ENCODE measurements at regions of chr15 and their contacts with region 1.

Region 1: GRCh38 chr15:71651750-71652186 is 158.6 kb upstream of the NR2E3 start:
- DNase-seq: peak; percentile 75
- ATAC-seq: peak; percentile 64
- H3K4me3 ChIP-seq: no peak overlapping the region
- H3K27ac ChIP-seq: no peak overlapping the region
- H3K4me1 ChIP-seq: peaks cover 10% of the 10 kb centered on the region
- H3K27me3 ChIP-seq: no peaks in the 10 kb centered on the region
- CTCF ChIP-seq: peak; percentile 82

Region 2: GRCh38 chr15:71435552-71435951 is 216.2 kb before region 1 on chr15:
- CTCF ChIA-PET with region 1: no interaction called
- POLR2A ChIA-PET with region 1: no interaction called
- intact Hi-C with region 1: no loop called
- DNase-seq: peak; percentile 0
- ATAC-seq: no peak
- H3K4me3 ChIP-seq: no peak overlapping the region
- H3K27ac ChIP-seq: no peak overlapping the region
- H3K4me1 ChIP-seq: peaks cover 34% of the 10 kb centered on the region
- H3K27me3 ChIP-seq: no peaks in the 10 kb centered on the region
- CTCF ChIP-seq: no peak

Region 3: GRCh38 chr15:71538181-71538580 is 113.6 kb before region 1 on chr15:
- CTCF ChIA-PET with region 1: no interaction called
- POLR2A ChIA-PET with region 1: no interaction called
- intact Hi-C with region 1: loop called (anchors 5 kb)
- DNase-seq: peak; percentile 79
- ATAC-seq: peak; percentile 74
- H3K4me3 ChIP-seq: peak overlapping the region; percentile 39; the same call in 1 of the 2 replicates
- H3K27ac ChIP-seq: peak overlapping the region; percentile 48
- H3K4me1 ChIP-seq: peaks cover 23% of the 10 kb centered on the region
- H3K27me3 ChIP-seq: no peaks in the 10 kb centered on the region
- CTCF ChIP-seq: no peak

Region 4: GRCh38 chr15:71596672-71597071 is 55.1 kb before region 1 on chr15:
- CTCF ChIA-PET with region 1: no interaction called
- POLR2A ChIA-PET with region 1: no interaction called
- intact Hi-C with region 1: no loop called
- DNase-seq: no peak
- ATAC-seq: no peak
- H3K4me3 ChIP-seq: no peak overlapping the region
- H3K27ac ChIP-seq: no peak overlapping the region
- H3K4me1 ChIP-seq: no peaks in the 10 kb centered on the region
- H3K27me3 ChIP-seq: no peaks in the 10 kb centered on the region
- CTCF ChIP-seq: no peak

Region 5: DNA sequence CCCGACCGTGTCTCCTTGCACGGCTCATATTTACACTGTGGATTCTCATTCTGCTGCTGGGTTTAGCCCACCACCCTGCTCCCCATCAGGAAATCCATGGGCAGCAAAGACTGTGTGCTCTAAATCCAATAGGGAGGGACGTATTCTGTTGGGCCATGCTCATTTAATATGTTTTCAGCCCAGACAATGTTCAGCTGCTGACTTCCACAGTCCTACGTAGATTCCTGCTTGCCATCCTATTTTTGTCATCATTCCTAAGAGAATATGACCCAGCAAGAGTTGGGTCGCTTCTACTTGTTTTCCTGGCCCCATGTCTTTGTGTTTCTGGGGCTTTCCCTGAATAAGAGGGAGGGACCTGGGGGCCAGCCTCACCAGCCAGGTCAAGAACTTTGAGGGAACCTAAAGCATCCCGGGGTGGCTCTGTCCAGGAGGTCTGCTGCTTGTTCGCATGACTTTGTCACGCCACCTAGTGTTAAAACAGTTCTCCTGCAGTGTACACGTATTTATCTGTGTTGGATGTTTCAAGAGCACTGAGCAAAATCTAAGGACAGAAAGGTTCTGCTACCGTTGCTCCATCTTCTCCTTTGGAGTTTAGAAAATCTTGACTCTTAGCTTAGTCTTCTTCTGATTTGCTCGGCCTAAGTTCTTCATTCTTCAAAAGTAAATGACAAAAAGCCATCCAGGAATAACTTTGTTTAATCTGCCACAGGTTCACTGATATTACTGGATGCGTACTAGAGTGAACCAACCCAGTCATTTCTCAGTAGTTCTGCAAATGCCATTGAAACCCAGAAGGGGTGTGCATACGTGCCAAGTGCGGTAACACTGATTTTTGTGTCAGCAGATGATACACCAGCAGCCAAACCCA is 78.7 kb after region 1 on chr15:
- CTCF ChIA-PET with region 1: no interaction called
- POLR2A ChIA-PET with region 1: no interaction called
- intact Hi-C with region 1: loop called (anchors 10 kb)
- DNase-seq: peak; percentile 76
- ATAC-seq: peak; percentile 88
- H3K4me3 ChIP-seq: no peak overlapping the region
- H3K27ac ChIP-seq: no peak overlapping the region
- H3K4me1 ChIP-seq: peaks cover 3% of the 10 kb centered on the region; the same call in 1 of the 2 replicates
- H3K27me3 ChIP-seq: no peaks in the 10 kb centered on the region
- CTCF ChIP-seq: peak; percentile 88

Measured in PC-3 (cell line).